ENCODE measurements at regions of chr5 and their contacts with region 1.

Region 1: DNA sequence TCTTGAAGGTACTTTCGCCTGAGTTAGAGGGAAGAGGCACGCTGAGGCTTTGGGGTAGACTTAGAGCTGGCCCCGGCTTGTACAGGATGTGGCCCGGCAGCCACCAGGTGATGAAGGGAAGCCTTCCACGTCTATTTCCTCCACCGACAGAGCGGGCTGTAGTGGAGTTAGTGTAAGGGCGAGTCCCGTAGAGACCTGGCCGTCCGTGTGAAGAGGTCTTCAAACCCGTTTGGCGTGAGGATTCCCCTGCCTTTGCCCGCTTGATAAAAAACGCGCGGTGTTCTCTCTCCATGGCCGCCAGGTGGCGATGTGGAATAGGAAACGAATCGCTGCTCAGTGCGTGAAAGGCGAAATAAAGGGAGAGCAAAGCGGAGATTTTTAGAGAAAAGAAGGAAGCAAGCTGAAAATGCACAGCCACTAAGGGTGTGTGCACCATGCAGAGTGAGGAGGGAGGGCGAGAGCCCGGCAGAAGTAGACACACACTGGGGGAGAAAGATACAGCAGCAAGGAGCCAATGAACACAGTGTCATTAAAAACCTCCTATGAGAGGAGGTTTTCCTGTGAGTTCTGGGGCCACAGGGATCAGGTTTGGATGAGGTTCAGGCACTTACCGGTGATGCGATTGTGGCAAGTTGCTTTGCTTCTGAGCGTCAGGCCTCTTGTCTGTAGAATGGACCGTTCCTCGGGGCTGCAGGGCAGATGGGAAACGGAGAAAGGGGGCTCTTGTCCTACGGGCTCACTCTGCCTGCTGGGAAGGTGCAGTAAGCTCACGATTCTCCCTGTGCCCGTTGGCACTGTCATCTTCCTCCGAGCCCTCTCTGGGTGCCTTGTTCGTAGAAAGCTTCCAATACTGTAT is 34.2 kb downstream of the STC2 start:
- DNase-seq: peak; percentile 75 to 78
- ATAC-seq: peak; percentile 75 to 94
- H3K4me3 ChIP-seq: peak overlapping the region; percentile 18; the same call in 2 of the 3 replicates
- H3K27ac ChIP-seq: peak overlapping the region; percentile 60 to 74; a peak in 5 of 6 replicates
- H3K4me1 ChIP-seq: peaks cover 3% of the 10 kb centered on the region; the same call in 1 of the 3 replicates
- CTCF ChIP-seq: peak; percentile 96
- EP300 ChIP-seq: no peak
- POLR2A ChIP-seq: no peak
- RAD21 ChIP-seq: peak; percentile 98 to 99

Region 2: GRCh38 chr5:173155912-173156311 is 138.1 kb before region 1 on chr5:
- CTCF ChIA-PET with region 1: no interaction called
- POLR2A ChIA-PET with region 1: no interaction called
- DNase-seq: no peak
- ATAC-seq: no peak
- H3K4me3 ChIP-seq: no peak overlapping the region
- H3K27ac ChIP-seq: no peak overlapping the region
- H3K4me1 ChIP-seq: no peaks in the 10 kb centered on the region
- CTCF ChIP-seq: no peak
- EP300 ChIP-seq: no peak
- POLR2A ChIP-seq: no peak
- RAD21 ChIP-seq: no peak

Region 3: DNA sequence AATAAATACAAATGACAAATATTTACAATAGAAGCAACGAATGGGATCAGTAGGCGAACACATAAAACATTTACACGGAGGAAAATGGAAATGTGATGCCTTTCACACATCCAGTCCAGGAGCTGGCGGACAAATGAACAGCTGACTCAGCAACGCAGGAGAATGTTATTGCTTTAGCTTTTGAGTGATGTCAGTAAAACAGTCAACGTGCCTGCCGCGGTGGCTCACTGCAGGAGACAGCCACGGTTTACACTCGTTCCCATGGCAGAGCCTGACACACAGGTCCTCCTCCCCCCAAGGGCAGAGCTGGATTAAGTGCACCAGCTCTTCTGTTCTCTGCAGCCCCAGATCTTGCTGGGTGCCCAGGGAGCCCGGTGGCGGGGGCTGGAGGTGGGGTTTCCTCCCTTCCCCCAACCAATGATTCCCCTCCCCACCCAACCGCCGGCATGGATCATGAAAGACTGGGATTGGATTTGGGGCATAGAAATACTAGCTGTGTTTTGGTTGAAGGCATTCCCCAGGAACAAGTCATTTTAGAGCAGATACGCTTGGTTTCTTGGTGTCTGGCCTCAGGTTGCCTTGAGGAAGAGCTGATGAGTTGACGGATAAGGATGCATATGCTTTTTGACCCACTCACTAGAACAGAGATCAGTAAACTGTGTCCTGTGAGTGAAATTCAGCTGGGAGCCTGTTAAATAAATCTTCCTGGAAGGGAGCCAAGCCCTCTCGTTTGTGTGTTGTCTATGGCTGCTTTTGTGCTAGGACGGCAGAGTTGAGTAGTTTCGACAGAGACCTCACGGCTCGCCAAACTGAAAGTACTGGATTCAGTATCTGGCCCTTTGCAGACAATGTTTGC is 21.7 kb after region 1 on chr5:
- CTCF ChIA-PET with region 1: interaction called, 35 read pairs
- POLR2A ChIA-PET with region 1: interaction called, 3 read pairs
- DNase-seq: no peak
- ATAC-seq: no peak
- H3K4me3 ChIP-seq: no peak overlapping the region
- H3K27ac ChIP-seq: no peak overlapping the region
- H3K4me1 ChIP-seq: no peaks in the 10 kb centered on the region
- CTCF ChIP-seq: no peak
- EP300 ChIP-seq: no peak
- POLR2A ChIP-seq: no peak
- RAD21 ChIP-seq: no peak

Region 4: GRCh38 chr5:173451031-173451430 is 157.0 kb after region 1 on chr5:
- CTCF ChIA-PET with region 1: interaction called, 12 read pairs
- POLR2A ChIA-PET with region 1: no interaction called
- DNase-seq: peak; percentile 33 to 62
- ATAC-seq: no peak
- H3K4me3 ChIP-seq: no peak overlapping the region
- H3K27ac ChIP-seq: peak overlapping the region; percentile 30 to 86; a peak in 4 of 6 replicates
- H3K4me1 ChIP-seq: peaks cover 45% of the 10 kb centered on the region
- CTCF ChIP-seq: no peak; the same call in 2 of the 3 replicates
- EP300 ChIP-seq: no peak
- POLR2A ChIP-seq: no peak
- RAD21 ChIP-seq: peak in 1 of 2 experiments; percentile 28; a peak in 2 of 5 replicates

Region 5: DNA sequence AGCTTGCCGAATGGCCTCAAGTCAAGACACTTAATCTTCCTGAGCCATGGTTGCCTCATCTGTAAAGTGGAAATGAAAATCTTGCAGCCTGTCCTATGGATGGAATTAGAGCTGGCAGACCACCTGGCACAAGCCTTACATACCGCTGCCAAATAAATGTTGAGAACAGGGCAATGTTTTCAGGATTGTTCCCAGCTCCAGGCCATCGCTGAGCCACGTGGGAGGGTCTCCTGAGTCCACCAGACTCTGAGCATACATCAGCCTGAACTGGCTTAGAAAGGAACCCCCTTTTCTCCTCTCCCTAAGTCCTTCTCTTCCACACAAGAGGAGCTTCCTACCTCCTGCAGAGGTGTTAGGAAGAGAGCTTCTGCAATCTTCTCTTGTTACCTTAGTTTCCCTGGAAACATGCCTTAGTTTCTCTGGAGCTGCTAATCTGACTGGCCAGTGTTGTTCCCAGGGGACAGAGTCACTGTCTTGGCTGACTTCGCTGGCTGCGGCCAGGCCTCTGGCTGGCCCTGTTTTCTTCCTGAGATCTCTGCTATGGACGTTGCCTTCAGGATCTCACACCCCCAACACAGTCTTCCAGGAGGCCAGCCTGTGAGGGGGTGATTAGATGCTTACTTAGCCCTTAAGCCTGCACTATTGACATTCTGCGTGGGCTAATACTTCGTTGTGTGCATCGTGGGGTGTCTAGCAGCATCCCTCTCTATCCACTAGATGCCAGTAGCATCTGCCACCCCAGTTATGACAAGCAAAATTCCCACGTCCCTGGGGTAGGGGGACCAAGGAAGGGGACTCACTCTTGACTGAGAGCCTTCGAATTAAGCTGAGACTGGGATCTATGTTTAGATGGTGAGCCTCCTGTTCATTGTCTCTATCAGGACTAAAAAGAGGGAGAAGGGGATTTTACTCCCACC is 260.3 kb after region 1 on chr5:
- CTCF ChIA-PET with region 1: interaction called, 14 read pairs
- POLR2A ChIA-PET with region 1: no interaction called
- DNase-seq: no peak
- ATAC-seq: no peak
- H3K4me3 ChIP-seq: no peak overlapping the region
- H3K27ac ChIP-seq: no peak overlapping the region
- H3K4me1 ChIP-seq: no peaks in the 10 kb centered on the region
- CTCF ChIP-seq: no peak
- EP300 ChIP-seq: no peak
- POLR2A ChIP-seq: no peak
- RAD21 ChIP-seq: no peak

Region 6: GRCh38 chr5:173581408-173582215 is 287.6 kb after region 1 on chr5:
- CTCF ChIA-PET with region 1: interaction called, 140 read pairs
- POLR2A ChIA-PET with region 1: no interaction called
- DNase-seq: peak; percentile 26 to 31
- ATAC-seq: peak; percentile 56 to 82; a peak in 3 of 6 replicates
- H3K4me3 ChIP-seq: no peak overlapping the region
- H3K27ac ChIP-seq: no peak overlapping the region
- H3K4me1 ChIP-seq: no peaks in the 10 kb centered on the region
- CTCF ChIP-seq: peak; percentile 54
- EP300 ChIP-seq: no peak
- POLR2A ChIP-seq: no peak
- RAD21 ChIP-seq: peak in 1 of 2 experiments; percentile 40; a peak in 2 of 5 replicates

Region 7: DNA sequence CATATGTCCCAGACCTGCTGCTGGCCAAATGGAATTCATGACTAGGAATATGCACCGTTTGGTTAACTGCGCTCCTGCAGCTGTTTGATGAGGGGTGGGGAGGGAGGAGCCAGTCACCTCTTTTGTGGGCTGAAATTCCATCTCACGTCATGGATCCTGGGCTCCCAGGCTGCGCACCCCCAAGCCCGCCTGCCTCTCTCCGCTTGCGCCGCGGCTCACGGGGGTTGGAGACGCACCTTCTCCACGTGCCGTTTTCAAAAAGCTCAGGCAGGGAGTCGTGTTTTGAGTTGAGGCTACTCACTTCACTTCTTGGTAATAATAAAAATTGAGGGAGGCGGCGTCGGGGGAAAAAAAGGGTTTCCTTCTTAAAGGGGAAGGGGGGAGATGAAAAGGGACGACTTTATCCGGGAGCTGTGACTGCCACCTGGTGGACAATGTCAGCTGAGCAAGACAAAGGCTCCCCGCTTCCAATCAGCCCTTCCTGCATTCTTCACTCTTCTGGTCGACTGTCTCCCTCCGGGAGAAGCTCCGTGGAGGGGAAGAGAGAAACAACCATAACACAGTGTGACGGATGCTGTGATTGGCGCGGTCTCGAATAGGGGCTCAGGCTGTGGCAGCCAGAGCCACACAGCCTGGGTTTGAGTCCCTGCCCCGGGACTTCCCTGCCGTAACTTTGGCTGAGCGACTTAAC is 679.0 kb after region 1 on chr5:
- CTCF ChIA-PET with region 1: interaction called, 19 read pairs
- POLR2A ChIA-PET with region 1: no interaction called
- DNase-seq: peak; percentile 83 to 86
- ATAC-seq: peak; percentile 55 to 72
- H3K4me3 ChIP-seq: peak overlapping the region; percentile 35; the same call in 2 of the 3 replicates
- H3K27ac ChIP-seq: peak overlapping the region; percentile 96 to 97
- H3K4me1 ChIP-seq: peaks cover 53% of the 10 kb centered on the region
- CTCF ChIP-seq: peak; percentile 94
- EP300 ChIP-seq: no peak
- POLR2A ChIP-seq: no peak
- RAD21 ChIP-seq: peak; percentile 97 to 99